ENCODE measurements at regions of chr6 and their contacts with region 1.

Region 1: GRCh38 chr6:55604021-55604420 is 25.0 kb upstream of the HMGCLL1 start:
- DNase-seq: no peak
- H3K4me3 ChIP-seq: no peak overlapping the region
- H3K27ac ChIP-seq: no peak overlapping the region
- H3K27me3 ChIP-seq: no peaks in the 10 kb centered on the region
- CTCF ChIP-seq: no peak

Region 2: GRCh38 chr6:55578537-55579363 is 25.3 kb before region 1 on chr6 and contains the start of gene HMGCLL1:
- CTCF ChIA-PET with region 1: no interaction called
- POLR2A ChIA-PET with region 1: no interaction called
- DNase-seq: no peak
- H3K4me3 ChIP-seq: peak within 1 kb of the TSS; percentile 55
- H3K27ac ChIP-seq: no peak within 1 kb of the TSS
- H3K27me3 ChIP-seq: no peaks in the 10 kb centered on the region
- CTCF ChIP-seq: no peak
- polyA plus RNA-seq, gene HMGCLL1: 0.15 and 0.33 TPM in 2 replicates

Region 3: DNA sequence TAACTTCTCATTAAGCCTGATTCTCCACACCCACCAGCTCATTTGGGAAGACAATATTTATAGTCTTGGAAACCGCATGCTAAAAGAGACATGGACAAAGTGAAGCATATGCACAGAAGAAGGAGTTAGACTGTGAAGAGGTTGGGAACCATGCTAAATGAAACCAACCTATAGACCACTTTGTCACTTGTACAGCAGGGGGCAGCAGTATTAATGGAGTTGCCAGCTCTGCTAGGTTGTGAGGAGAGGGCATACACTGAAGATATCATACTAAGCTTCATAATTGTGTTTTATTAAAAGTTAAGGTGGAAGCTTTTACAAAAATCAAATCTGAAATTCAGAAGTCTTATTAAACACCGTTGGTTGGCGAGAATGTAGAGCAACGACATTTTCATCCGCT is 13.3 kb after region 1 on chr6:
- CTCF ChIA-PET with region 1: interaction called, 12 read pairs
- POLR2A ChIA-PET with region 1: no interaction called
- DNase-seq: no peak
- H3K4me3 ChIP-seq: no peak overlapping the region
- H3K27ac ChIP-seq: no peak overlapping the region
- H3K27me3 ChIP-seq: no peaks in the 10 kb centered on the region
- CTCF ChIP-seq: peak; percentile 68